ENCODE measurements at regions of chr2 and their contacts with region 1.

Region 1: GRCh38 chr2:80238692-80239469 is 65.7 kb downstream of the LRRTM1 start:
- DNase-seq: peak in 1 of 2 experiments; percentile 80
- H3K4me3 ChIP-seq: no peak overlapping the region
- H3K27ac ChIP-seq: no peak overlapping the region
- H3K4me1 ChIP-seq: no peaks in the 10 kb centered on the region
- H3K27me3 ChIP-seq: no peaks in the 10 kb centered on the region
- CTCF ChIP-seq: peak; percentile 54 to 79 (median 64)
- EP300 ChIP-seq: no peak
- POLR2A ChIP-seq: no peak
- RAD21 ChIP-seq: peak; percentile 41 to 65

Region 2: DNA sequence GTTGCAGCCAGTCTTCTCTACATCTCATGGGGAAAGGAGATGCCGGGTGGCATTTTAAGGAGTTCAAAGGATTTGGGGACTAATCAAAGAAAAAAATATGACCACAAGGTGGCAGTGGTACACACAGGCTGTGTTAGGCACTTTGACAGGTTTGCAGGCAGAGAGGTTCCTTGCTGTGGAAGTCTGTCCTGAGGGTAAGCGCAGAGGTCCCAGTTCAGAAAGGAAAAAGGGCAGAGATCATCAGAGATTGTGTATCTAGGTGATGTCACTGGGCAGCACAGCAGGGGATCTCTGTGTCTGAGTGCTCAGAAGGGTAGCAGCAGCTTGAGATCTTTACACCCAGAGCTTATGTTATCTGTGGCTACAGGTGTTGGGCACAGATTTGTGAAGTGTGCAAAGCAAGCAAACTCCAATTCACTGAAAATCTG is 165.7 kb before region 1 on chr2:
- CTCF ChIA-PET with region 1: interaction called, 23 read pairs
- POLR2A ChIA-PET with region 1: no interaction called
- DNase-seq: no peak
- H3K4me3 ChIP-seq: no peak overlapping the region
- H3K27ac ChIP-seq: no peak overlapping the region
- H3K4me1 ChIP-seq: no peaks in the 10 kb centered on the region
- H3K27me3 ChIP-seq: no peaks in the 10 kb centered on the region; a peak in 1 of 7 replicates
- CTCF ChIP-seq: peak; percentile 21 to 77 (median 73)
- EP300 ChIP-seq: no peak
- POLR2A ChIP-seq: no peak
- RAD21 ChIP-seq: peak; percentile 85 to 88

Region 3: GRCh38 chr2:80199504-80199903 is 39.4 kb before region 1 on chr2:
- CTCF ChIA-PET with region 1: interaction called, 13 read pairs
- POLR2A ChIA-PET with region 1: no interaction called
- DNase-seq: no peak
- H3K4me3 ChIP-seq: no peak overlapping the region
- H3K27ac ChIP-seq: no peak overlapping the region
- H3K4me1 ChIP-seq: no peaks in the 10 kb centered on the region; a peak in 1 of 7 replicates
- H3K27me3 ChIP-seq: no peaks in the 10 kb centered on the region
- CTCF ChIP-seq: no peak
- EP300 ChIP-seq: no peak
- POLR2A ChIP-seq: no peak
- RAD21 ChIP-seq: no peak

Region 4: DNA sequence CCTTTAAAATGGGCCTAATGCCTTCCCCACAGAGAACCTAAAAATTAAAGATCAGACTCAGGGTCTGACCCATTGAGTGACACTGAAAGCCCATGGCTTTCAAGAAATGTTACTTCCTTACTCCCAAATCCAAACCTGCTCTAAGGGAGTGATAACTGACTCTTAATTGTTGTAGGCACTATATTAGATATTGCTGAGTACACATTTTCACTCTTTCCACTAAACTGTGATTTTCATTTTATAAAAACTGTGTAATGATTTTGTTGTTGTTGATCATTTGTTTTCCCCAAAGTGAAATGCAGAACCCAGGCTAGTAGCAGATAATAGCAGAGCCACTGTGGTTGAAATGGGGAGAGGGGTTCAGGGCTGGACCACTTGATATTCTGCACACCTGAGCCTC is 21.4 kb before region 1 on chr2:
- CTCF ChIA-PET with region 1: interaction called, 30 read pairs
- POLR2A ChIA-PET with region 1: no interaction called
- DNase-seq: no peak
- H3K4me3 ChIP-seq: no peak overlapping the region
- H3K27ac ChIP-seq: no peak overlapping the region
- H3K4me1 ChIP-seq: no peaks in the 10 kb centered on the region
- H3K27me3 ChIP-seq: no peaks in the 10 kb centered on the region
- CTCF ChIP-seq: no peak
- EP300 ChIP-seq: no peak
- POLR2A ChIP-seq: no peak
- RAD21 ChIP-seq: no peak

Region 5: GRCh38 chr2:80255918-80256781 is 17.3 kb after region 1 on chr2:
- CTCF ChIA-PET with region 1: interaction called, 31 read pairs
- POLR2A ChIA-PET with region 1: interaction called, 3 read pairs
- DNase-seq: no peak
- H3K4me3 ChIP-seq: no peak overlapping the region
- H3K27ac ChIP-seq: no peak overlapping the region
- H3K4me1 ChIP-seq: peaks cover 0 to 4% (median 2%) of the 10 kb centered on the region in 4 experiments; a peak in 1 of 7 replicates
- H3K27me3 ChIP-seq: no peaks in the 10 kb centered on the region; a peak in 1 of 7 replicates
- CTCF ChIP-seq: peak; percentile 8 to 59 (median 51)
- EP300 ChIP-seq: no peak
- POLR2A ChIP-seq: no peak
- RAD21 ChIP-seq: peak; percentile 56 to 67